Body of pancreas (tissue), 4 donors: ENCODE measurements at regions of chr6 and their contacts with region 1.

Region 1: DNA sequence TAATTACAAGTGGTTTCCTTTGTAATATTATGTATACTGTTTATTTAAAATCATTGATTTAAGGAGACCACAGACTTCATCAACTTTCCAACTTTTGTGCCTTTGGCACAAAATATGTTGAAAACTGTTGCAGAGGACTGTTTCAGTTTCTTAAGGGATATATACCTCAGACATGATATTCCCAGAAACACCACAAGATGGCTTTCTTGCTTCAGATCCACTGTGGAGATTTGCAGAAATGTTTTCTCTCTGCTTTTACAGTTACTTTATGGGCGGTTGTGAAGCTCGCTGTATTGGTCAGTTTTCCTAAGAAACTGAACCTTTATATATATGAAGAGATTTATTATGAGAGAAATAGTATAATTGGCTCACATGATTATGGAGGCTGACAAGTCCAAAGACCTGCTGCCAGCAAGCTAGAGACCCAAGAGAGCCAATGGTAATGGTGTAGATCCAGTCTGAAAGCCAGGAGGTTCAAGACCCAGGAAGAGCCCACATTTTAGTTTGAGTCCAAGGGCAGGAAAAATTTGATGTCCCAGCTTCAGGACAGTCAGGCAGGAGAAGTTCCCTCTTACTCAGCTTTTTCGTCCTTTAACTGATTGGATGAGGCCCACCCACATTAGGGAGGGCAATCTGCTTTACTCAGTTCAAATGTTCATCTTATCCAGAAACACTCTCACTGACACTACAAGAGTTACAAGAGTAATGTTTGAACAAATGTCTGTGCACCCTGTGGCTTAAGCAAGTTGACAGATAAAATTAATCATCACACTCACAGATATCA is 12.8 kb downstream of the ME1 start:
- DNase-seq: no peak
- ATAC-seq: peak; percentile 62
- H3K4me3 ChIP-seq: no peak overlapping the region
- H3K27ac ChIP-seq: no peak overlapping the region
- H3K4me1 ChIP-seq: peaks cover 7% of the 10 kb centered on the region
- H3K27me3 ChIP-seq: no peaks in the 10 kb centered on the region
- CTCF ChIP-seq: peak in 6 of 7 experiments; percentile 38 to 76 (median 64)
- POLR2A ChIP-seq: no peak

Region 2: DNA sequence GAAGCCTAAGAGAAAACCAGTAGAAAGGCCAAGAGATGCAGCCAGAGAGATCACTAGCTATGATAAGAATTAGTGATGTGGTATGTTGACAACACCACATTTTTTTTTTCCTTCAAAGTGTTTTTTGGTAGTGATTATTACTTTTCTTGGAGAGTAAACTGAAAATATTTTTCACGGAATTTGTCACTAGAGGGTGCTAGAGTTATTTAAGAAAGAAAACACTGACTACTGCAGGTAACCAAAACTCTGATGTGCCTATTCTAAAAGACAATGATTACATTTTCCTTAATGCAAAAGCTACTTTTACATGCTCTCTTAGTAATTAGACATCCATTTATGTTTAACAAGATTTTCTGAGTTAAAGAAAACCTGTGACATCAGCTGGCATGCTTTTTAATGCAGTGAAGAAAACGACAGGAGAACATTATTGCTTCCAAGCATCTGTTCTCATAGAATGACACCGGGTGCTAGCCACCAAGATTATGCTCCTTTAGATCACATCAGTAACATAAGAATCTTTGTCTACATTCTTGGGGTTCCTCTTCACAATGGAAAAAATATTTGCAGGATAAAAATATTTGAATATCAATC is 196.1 kb before region 1 on chr6:
- intact Hi-C with region 1: loop called (anchors 10 kb)
- DNase-seq: no peak
- ATAC-seq: peak; percentile 40
- H3K4me3 ChIP-seq: no peak overlapping the region
- H3K27ac ChIP-seq: no peak overlapping the region
- H3K4me1 ChIP-seq: no peaks in the 10 kb centered on the region
- H3K27me3 ChIP-seq: no peaks in the 10 kb centered on the region
- CTCF ChIP-seq: peak; percentile 35 to 63 (median 58)
- POLR2A ChIP-seq: no peak

Region 3: DNA sequence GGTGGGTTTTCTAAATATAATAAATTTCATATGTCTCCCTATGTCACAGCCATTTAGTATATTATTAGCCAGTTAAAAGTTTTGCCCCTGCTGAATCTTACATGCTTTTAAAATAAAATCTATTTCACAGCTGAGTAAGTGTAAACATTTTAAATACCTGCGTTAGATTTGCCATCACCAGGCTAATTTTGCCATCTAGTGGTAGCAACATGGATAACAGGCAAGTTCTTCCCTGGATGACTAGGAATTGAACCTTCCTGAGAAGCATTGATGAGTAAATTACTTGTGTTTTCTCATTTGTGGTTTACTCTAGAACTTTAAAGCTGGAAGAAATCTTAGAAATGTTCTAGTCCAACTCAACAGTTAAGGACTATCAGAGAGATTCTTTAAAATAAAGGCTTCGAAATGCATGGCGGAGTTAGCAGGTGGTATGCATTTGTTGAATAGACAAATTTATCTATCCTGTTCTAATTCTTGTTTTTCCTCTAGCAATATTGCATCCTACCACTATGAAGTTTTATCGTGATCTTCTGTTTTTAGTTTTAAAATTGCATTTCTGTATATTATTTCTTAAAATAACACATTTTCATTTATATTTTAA is 96.9 kb after region 1 on chr6:
- intact Hi-C with region 1: loop called (anchors 5 kb)
- DNase-seq: peak; percentile 15 to 53 (median 33)
- ATAC-seq: peak; percentile 54
- H3K4me3 ChIP-seq: no peak overlapping the region
- H3K27ac ChIP-seq: no peak overlapping the region
- H3K4me1 ChIP-seq: peaks cover 11% of the 10 kb centered on the region
- H3K27me3 ChIP-seq: no peaks in the 10 kb centered on the region
- CTCF ChIP-seq: peak; percentile 33 to 89 (median 75)
- POLR2A ChIP-seq: no peak

Region 4: DNA sequence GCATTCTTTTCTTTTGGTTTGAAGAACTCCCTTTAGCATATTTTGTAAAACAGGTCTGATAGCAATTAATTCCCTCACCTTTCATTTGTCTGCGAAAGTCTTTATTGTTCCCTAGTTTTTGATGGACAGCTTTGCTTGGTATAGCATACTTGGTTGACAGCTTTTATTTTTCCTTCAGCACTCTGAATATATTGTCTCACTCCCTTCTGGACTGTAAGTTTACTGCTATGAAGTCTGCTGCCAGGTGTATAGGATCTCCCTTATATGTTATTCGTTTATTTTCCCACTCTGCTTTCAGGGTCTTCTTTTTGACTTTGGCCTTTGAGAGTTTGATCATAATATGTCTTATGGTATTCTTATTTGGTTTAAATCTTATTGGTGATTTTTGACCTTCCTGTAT is 338.5 kb after region 1 on chr6:
- intact Hi-C with region 1: no loop called
- DNase-seq: no peak
- ATAC-seq: no peak
- H3K4me3 ChIP-seq: no peak overlapping the region
- H3K27ac ChIP-seq: no peak overlapping the region
- H3K4me1 ChIP-seq: no peaks in the 10 kb centered on the region
- H3K27me3 ChIP-seq: no peaks in the 10 kb centered on the region
- CTCF ChIP-seq: no peak
- POLR2A ChIP-seq: no peak